Activated naive CD4-positive, alpha-beta T cell treated with anti-CD3 and anti-CD28 coated beads for 36 hours (primary cell): ENCODE measurements at regions of chr2 and their contacts with region 1.

Region 1: GRCh38 chr2:74958274-74959105 is at the start of gene POLE4:
- DNase-seq: peak; percentile 95
- H3K4me3 Mint-ChIP-seq: peak within 1 kb of the TSS; percentile 80
- H3K27ac Mint-ChIP-seq: peak within 1 kb of the TSS; percentile 87
- H3K4me1 Mint-ChIP-seq: peaks cover 60% of the 10 kb centered on the region
- H3K27me3 Mint-ChIP-seq: no peaks in the 10 kb centered on the region
- total RNA-seq, gene POLE4: 69.7 to 76.5 TPM

Region 2: GRCh38 chr2:73926493-73927338 is 1031.8 kb before region 1 on chr2 and contains the start of gene DGUOK:
- CTCF ChIA-PET with region 1: no interaction called
- intact Hi-C with region 1: loop called (anchors 5 kb)
- DNase-seq: peak; percentile 99
- H3K4me3 Mint-ChIP-seq: peak within 1 kb of the TSS; percentile 87
- H3K27ac Mint-ChIP-seq: peak within 1 kb of the TSS; percentile 94
- H3K4me1 Mint-ChIP-seq: peaks cover 44% of the 10 kb centered on the region
- H3K27me3 Mint-ChIP-seq: no peaks in the 10 kb centered on the region
- total RNA-seq, gene DGUOK: 112 to 115 TPM

Region 3: DNA sequence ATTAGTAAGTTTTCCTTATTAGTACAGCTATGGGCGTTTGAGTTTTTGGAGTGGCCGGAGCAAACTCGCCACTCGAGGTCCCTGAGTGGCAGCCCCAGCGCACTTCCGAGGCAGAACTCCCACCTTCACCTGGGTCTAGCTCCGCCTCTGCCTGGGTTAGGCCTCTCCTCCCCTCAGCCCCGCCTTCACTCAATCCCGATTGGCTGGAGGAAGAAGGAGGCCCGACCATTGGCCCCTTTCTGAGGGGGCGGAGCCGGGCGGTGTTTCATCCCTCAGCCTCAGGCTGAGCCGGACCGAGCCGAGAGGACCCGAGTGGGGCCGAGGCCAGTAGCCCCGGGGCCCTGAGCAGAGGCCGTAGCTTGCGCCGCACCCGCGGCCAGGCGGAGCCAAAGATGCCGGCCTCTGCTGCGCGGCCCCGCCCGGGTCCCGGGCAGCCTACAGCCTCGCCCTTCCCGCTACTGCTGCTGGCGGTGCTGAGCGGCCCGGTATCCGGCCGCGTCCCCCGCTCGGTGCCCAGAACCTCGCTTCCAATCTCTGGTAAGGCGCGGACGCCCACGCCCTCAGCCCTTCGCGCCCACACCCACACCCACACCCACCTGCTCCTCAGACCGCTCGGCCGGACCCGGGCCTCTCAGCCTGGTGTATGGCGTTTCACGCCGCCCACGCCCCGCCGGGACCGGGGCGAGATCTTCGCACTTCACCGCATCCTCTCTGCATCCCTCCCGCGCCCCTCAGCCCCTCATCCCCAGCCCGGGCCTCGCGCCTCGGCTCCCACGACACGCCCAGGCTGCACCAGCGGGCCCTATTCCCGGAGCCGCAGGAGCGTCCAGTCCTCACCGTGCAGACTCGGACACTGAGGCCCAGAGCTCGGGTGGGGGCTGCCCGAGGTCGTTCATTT is 304.3 kb before region 1 on chr2 and contains the start of gene SEMA4F:
- CTCF ChIA-PET with region 1: no interaction called
- intact Hi-C with region 1: loop called (anchors 2 kb)
- DNase-seq: peak; percentile 97
- H3K4me3 Mint-ChIP-seq: peak within 1 kb of the TSS; percentile 72
- H3K27ac Mint-ChIP-seq: peak within 1 kb of the TSS; percentile 33
- H3K4me1 Mint-ChIP-seq: peaks cover 11% of the 10 kb centered on the region
- H3K27me3 Mint-ChIP-seq: peaks cover under 1% of the 10 kb centered on the region
- total RNA-seq, gene SEMA4F: 4.3 to 5.3 TPM

Region 4: DNA sequence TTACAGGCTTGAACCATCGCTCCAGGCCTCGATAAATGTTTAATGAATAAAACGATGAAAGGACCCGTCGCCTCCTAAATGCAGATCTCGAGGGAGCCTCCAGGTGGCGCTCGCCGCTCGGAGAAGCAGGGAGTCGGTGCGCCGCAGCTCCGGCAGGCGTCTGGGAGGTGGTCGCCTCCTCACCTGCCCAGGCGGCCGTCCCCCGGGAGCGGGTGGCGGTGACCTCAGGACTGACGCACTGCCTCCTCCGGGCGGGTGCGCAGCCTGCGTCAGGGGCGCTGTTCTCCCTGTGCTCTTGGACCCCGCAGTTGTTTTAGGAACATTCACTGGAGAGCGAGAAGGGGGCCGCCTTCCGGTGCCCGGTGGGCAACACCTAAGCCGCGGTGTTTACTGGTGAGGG is 38.7 kb before region 1 on chr2:
- CTCF ChIA-PET with region 1: interaction called, 10 read pairs
- intact Hi-C with region 1: loop called (anchors 2 kb)
- DNase-seq: peak; percentile 80
- H3K4me3 Mint-ChIP-seq: peak overlapping the region; percentile 41
- H3K27ac Mint-ChIP-seq: no peak overlapping the region
- H3K4me1 Mint-ChIP-seq: peaks cover 5% of the 10 kb centered on the region
- H3K27me3 Mint-ChIP-seq: peaks cover 3% of the 10 kb centered on the region

Region 5: DNA sequence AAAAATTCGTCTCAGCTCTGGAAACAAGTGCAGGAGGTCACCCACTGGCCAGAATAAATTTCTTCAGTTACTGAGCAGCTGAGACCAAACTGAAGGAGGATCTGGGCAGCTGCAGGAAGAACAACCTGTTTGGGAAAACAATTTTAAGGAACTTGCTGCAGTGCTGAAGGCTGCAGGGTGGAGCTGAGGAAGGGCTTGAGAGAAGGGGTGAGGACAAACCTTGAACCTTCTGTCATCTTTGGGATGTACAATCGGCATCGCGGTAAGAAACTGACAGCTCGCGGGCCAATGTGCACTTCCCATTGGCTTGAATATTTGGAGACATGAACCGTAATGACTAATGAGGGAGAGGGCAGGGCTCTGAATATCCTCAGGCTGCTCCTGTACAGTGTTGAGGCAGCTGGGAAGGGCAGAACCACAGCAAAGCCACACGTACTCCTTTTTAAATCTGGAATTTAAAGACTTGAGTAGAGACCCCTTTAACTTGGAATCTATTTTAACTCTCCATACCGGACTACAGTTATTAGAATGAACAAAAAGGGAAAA is 150.5 kb after region 1 on chr2:
- CTCF ChIA-PET with region 1: no interaction called
- intact Hi-C with region 1: no loop called
- DNase-seq: no peak
- H3K4me3 Mint-ChIP-seq: no peak overlapping the region
- H3K27ac Mint-ChIP-seq: no peak overlapping the region
- H3K4me1 Mint-ChIP-seq: no peaks in the 10 kb centered on the region
- H3K27me3 Mint-ChIP-seq: no peaks in the 10 kb centered on the region

Region 6: DNA sequence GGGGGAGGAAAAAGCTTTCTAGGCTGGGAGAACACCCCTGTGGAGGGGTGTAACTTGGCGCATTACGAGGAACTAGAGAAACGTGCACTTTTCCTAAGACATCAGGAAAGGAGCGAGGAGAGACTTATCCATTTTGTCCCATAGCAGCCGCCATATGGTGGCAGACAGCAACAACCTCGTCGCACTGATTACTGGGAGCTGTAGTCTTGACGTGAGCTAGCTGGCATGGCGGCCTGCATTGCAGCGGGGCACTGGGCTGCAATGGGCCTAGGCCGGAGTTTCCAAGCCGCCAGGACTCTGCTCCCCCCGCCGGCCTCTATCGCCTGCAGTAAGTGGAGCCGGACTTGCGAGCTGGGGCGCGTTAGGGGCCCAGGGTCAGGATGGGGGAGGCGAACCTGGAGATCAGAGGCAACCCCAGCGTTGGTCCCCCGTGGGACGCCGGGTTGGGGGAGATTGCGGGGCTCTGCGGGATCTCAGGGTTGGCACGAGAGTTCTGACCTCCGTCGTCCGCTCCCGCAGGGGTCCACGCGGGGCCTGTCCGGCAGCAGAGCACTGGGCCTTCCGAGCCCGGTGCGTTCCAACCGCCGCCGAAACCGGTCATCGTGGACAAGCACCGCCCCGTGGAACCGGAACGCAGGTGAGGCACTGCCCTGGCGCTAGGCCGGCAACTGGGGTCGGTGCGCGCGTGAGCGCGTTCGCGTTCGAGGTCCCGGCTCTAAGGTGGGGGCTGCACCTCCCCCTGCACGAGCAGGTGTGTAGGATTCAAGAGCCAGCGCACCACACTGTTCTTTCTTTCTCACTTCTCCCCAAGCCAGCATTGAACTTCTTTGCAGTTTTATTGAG is 688.3 kb after region 1 on chr2 and contains the start of gene MRPL19:
- CTCF ChIA-PET with region 1: no interaction called
- intact Hi-C with region 1: loop called (anchors 1 kb)
- DNase-seq: peak; percentile 86
- H3K4me3 Mint-ChIP-seq: peak within 1 kb of the TSS; percentile 90
- H3K27ac Mint-ChIP-seq: peak within 1 kb of the TSS; percentile 88
- H3K4me1 Mint-ChIP-seq: peaks cover 28% of the 10 kb centered on the region
- H3K27me3 Mint-ChIP-seq: no peaks in the 10 kb centered on the region
- total RNA-seq, gene MRPL19: 70.3 to 71.7 TPM